ENCODE measurements at regions of chr11 and their contacts with region 1.

Region 1: GRCh38 chr11:123020968-123021367 is 39.3 kb upstream of the BSX start:
- DNase-seq: peak in 1 of 2 donors; percentile 19
- ATAC-seq: peak; percentile 51

Region 2: GRCh38 chr11:122852074-122852795 is 168.7 kb before region 1 on chr11:
- intact Hi-C with region 1: no loop called
- DNase-seq: no peak
- ATAC-seq: no peak

Region 3: GRCh38 chr11:122863704-122864326 is 157.2 kb before region 1 on chr11:
- intact Hi-C with region 1: loop called in 1 of 2 experiments (anchors 5 kb)
- DNase-seq: peak in 1 of 2 donors; percentile 47
- ATAC-seq: no peak

Region 4: DNA sequence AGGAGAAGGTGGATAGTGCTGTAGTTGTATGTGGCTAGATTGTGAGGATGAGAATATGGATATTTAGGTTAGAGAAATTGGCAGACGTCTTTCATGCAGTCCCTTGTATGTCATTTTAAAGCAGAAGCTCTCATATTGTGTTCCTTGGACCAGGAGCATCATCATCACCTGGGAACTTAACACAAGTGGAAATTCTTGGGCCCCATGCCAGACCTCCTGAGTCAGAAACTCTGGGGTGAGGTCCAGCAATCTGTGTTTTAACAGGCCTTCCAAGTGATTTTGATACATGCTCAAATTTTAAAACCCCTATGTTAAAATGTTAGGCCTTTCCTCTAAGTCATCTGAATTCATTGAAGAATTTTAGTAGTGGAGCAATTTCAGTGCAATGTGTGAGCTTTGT is 103.7 kb before region 1 on chr11:
- intact Hi-C with region 1: no loop called
- DNase-seq: no peak
- ATAC-seq: no peak

Region 5: DNA sequence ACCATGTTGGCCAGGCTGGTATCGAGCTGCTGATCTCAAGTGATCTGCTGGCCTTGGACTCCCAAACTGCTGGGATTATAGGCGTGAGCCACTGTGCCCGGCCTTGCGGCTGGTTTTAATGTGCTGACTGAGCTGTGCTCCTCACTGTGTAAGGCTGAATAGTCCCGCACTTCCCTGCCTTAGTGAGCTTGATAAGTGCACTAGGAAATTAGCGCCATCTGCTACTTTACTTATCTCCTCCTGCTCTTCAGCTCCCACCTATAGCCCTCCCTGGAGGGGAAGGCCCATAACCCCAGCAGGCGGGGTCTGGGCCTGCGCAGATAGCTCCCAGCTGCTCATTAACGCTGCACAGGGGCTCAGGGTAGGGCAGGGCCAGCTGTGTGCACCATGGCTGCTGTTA is 124.7 kb after region 1 on chr11:
- intact Hi-C with region 1: no loop called
- DNase-seq: no peak
- ATAC-seq: no peak

Region 6: GRCh38 chr11:123330071-123330470 is 309.1 kb after region 1 on chr11:
- intact Hi-C with region 1: no loop called
- DNase-seq: no peak
- ATAC-seq: no peak